ENCODE measurements at regions of chr1 and their contacts with region 1.

Region 1: DNA sequence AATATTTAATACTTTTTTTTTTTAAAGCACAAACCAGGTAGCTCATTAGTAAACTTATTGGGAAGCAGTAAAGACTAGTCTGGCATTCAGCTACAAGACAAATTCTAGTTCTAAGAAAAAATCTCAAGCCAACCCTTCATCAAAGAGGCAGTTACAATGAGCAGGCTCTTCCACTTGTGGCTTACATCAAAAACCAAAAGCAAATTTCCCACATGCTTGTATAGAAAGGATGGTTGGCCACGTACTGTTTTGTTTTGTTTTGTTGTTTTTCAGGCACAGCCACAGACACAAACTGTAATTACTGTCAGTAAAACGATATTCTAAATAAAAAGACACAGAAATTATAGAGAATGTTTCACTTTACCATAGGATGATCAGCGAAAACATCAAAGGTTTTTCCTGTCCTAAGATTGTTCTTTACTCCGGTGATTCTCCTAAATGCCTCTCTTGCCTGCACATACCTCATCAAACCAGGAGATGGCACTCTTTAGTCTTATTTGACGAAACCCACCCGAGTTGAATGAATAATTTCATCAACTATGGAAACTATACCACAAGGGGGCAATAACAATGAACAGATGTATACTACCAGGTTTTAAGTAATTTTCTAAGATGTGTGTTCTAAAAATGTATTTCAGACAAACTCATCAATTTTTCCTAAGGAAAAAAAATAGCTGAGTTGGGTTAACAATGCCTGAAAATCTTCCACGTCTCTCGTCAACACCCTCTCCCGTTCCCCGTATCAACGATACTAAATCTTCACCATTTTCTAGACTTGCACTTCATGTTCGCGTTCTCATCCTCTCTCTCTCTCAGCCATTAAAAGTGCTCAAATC is 26.9 kb downstream of the RPL5 start:
- DNase-seq: peak; percentile 36
- H3K4me3 ChIP-seq: no peak overlapping the region
- H3K27me3 ChIP-seq: no peaks in the 10 kb centered on the region
- CTCF ChIP-seq: peak; percentile 82

Region 2: DNA sequence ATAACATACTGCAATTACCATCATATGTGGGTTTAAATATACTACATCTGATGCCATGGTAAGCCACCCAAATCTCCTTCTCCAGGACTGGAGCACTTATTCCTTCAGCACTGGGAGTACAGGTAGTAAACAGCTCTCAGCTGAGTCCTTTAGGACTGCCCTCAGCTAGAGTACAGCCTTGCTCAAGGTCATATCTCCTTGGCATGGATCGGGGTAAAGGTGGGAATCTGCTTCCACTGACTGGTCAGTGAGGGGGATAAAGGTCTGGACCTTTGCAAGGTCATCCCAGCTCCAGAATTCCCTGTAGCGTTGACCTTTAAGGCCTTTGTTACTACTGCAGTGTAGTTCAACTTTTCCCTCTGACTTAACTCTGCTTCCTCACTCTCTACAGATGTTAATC is 11.8 kb after region 1 on chr1:
- CTCF ChIA-PET with region 1: interaction called, 18 read pairs
- POLR2A ChIA-PET with region 1: no interaction called
- DNase-seq: no peak
- H3K4me3 ChIP-seq: no peak overlapping the region
- H3K27me3 ChIP-seq: no peaks in the 10 kb centered on the region
- CTCF ChIP-seq: no peak

Region 3: GRCh38 chr1:92877081-92877711 is 18.4 kb after region 1 on chr1:
- CTCF ChIA-PET with region 1: interaction called, 14 read pairs
- POLR2A ChIA-PET with region 1: no interaction called
- DNase-seq: no peak
- H3K4me3 ChIP-seq: no peak overlapping the region
- H3K27me3 ChIP-seq: no peaks in the 10 kb centered on the region
- CTCF ChIP-seq: no peak

Region 4: DNA sequence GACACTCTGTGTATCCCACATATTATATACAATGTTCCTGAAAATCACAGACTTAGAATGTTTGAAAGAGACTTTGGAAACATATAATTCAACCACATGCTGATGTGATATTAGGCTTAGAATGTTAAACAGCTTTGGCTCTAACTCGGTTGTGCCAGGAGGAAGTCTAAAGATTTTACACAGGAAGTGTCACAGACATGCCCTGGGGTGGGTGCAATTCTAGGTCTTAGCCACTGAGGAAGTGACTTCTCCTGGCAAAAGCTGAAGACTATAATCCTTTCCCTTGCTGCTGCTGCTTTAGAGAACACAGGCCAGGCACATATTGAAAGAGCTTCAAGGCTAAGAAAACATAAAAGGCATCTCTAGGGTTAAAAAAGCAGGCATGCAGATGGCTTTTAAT is 24.0 kb after region 1 on chr1:
- CTCF ChIA-PET with region 1: interaction called, 14 read pairs
- POLR2A ChIA-PET with region 1: no interaction called
- DNase-seq: no peak
- H3K4me3 ChIP-seq: no peak overlapping the region
- H3K27me3 ChIP-seq: no peaks in the 10 kb centered on the region
- CTCF ChIP-seq: no peak

Region 5: DNA sequence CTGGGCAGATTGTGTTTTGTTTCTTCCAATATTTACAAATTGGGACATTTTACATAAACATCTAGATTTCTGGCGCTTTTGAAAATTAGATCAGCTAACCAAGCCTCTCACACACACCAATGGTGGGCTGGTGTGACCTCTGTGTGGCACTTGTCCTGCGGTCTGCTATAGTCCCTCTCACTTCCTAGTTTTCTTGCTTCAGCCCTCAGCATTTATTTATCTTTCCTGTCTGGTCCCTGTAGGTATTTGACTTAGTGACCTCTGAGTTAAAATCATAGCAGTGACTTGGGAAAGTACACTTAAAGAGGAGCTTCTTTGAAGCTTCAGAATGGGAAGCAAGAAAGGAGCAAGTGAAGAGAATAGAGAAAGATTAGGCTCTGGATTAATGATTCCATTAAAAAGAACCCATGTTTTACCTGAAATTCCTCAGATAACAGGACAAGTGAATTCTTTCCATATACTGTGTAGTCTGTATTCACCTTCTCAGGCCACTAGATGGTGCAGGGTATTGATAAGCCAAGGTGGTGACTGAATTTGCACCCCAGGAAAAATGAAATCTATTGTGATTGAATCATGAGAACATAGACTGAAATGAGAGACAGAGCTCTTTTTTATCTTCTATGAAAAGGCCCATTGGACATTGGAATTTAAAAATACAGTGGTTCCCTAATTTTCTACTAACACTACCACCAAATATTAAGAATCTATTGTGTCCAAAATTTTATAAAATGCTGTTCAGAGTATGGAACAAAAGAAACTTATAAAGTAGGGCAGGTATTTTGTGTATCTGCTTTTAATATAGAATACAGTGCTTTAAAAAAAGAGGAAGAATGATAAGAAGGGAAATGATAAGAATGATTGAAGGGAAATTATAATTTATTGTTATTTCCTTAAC is 109.6 kb after region 1 on chr1:
- CTCF ChIA-PET with region 1: interaction called, 134 read pairs
- POLR2A ChIA-PET with region 1: no interaction called
- DNase-seq: no peak
- H3K4me3 ChIP-seq: no peak overlapping the region
- H3K27me3 ChIP-seq: peaks cover 5% of the 10 kb centered on the region
- CTCF ChIP-seq: peak; percentile 67

Region 6: DNA sequence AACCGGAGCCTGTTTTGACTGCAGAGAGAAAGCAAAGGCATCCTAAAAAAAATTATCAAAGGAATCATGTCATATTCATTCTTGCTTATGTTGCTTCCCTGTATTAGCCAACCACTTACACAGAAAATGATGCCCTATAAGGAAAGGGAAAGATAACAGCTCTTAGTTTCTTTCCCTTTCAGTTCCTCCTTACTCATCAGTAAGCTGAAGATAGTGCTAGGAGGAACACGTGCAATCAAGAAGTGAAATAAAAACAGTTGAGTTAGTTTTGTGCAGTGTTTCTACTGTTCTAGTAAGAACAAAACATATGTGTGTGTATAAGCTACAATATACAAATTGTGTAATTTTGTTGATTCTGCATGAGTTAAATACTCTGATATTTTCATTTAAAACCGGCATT is 175.0 kb after region 1 on chr1:
- CTCF ChIA-PET with region 1: no interaction called
- POLR2A ChIA-PET with region 1: no interaction called
- DNase-seq: no peak
- H3K4me3 ChIP-seq: no peak overlapping the region
- H3K27me3 ChIP-seq: peaks cover 9% of the 10 kb centered on the region
- CTCF ChIP-seq: no peak

Measured in BJ (cell line).